Naive thymus-derived CD4-positive, alpha-beta T cell (primary cell): ENCODE measurements at regions of chr11 and their contacts with region 1.

Region 1: GRCh38 chr11:65013692-65014145 is 241 bp upstream of the ARL2 start:
- DNase-seq: peak in 8 of 9 donors; percentile 77 to 93 (median 90)
- ATAC-seq: peak; percentile 94
- H3K4me3 ChIP-seq: peak overlapping the region; percentile 97
- H3K4me3 Mint-ChIP-seq: peak overlapping the region; percentile 90 to 95 (median 92)
- H3K27ac ChIP-seq: peak overlapping the region; percentile 84
- H3K27ac Mint-ChIP-seq: peak overlapping the region; percentile 89 to 99 (median 95)
- H3K4me1 ChIP-seq: peaks cover 4 to 9% of the 10 kb centered on the region in 2 donors
- H3K4me1 Mint-ChIP-seq: peaks cover 14 to 33% (median 29%) of the 10 kb centered on the region in 7 donors
- H3K27me3 ChIP-seq: no peaks in the 10 kb centered on the region
- H3K27me3 Mint-ChIP-seq: no peaks in the 10 kb centered on the region

Region 2: GRCh38 chr11:64803163-64803845 is 210.4 kb before region 1 on chr11 and contains the start of gene MAP4K2:
- CTCF ChIA-PET with region 1: no interaction called
- POLR2A ChIA-PET with region 1: no interaction called
- intact Hi-C with region 1: loop called in 1 of 2 experiments (anchors 2 kb)
- DNase-seq: peak; percentile 80 to 96 (median 87)
- ATAC-seq: peak; percentile 98
- H3K4me3 ChIP-seq: peak within 1 kb of the TSS; percentile 91
- H3K4me3 Mint-ChIP-seq: peak within 1 kb of the TSS; percentile 85 to 92 (median 88)
- H3K27ac ChIP-seq: peak within 1 kb of the TSS; percentile 98
- H3K27ac Mint-ChIP-seq: peak within 1 kb of the TSS; percentile 82 to 97 (median 95)
- H3K4me1 ChIP-seq: peaks cover 9 to 23% of the 10 kb centered on the region in 2 donors
- H3K4me1 Mint-ChIP-seq: peaks cover 27 to 43% (median 32%) of the 10 kb centered on the region in 7 donors
- H3K27me3 ChIP-seq: no peaks in the 10 kb centered on the region
- H3K27me3 Mint-ChIP-seq: no peaks in the 10 kb centered on the region
- total RNA-seq, gene MAP4K2: 75.2 to 130 (median 84.3) TPM

Region 3: DNA sequence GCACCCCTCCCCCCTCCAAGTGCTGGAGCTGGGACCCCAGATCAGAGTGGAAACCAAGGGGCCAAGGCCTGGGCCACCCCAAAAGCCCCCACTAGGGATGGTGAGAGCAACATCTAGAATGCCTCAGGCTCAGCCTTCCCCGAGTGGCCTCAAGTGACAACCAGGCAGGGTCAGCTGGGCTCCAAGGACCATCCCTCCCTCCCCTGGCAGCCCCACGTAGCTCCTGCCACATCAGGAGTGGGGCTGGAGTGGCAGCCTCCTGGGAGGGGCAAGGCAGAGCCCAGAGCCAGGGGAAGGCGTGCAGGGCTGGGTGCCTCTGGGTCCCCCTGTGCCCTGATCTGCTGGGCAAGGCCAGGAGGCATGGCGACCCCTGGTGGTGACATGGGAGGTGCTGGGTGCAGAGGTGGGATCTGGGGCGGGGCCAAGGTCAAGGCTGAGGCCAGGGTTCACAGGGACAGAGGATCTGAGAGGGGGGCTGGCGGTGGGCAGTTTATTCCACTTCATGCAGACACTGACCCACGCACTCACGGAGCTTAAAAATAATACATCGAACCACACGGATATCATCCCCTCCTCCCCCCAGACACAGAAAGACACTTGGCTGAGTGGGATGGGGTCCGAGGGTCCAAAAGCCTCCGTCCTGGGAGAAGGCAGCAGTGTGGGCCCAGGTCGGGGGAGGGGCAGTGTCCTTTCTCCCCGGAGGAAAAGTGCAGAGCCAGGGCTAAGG is 119.5 kb before region 1 on chr11:
- CTCF ChIA-PET with region 1: no interaction called
- POLR2A ChIA-PET with region 1: no interaction called
- intact Hi-C with region 1: no loop called
- DNase-seq: peak; percentile 75 to 93 (median 87)
- ATAC-seq: peak; percentile 89
- H3K4me3 ChIP-seq: no peak overlapping the region
- H3K4me3 Mint-ChIP-seq: peak overlapping the region in 1 of 10 donors; percentile 21
- H3K27ac ChIP-seq: no peak overlapping the region
- H3K27ac Mint-ChIP-seq: peak overlapping the region in 2 of 9 donors; percentile 45 to 75
- H3K4me1 ChIP-seq: peaks cover 0 to 6% of the 10 kb centered on the region in 2 donors
- H3K4me1 Mint-ChIP-seq: peaks cover 0 to 6% (median 0%) of the 10 kb centered on the region in 7 donors
- H3K27me3 ChIP-seq: no peaks in the 10 kb centered on the region
- H3K27me3 Mint-ChIP-seq: no peaks in the 10 kb centered on the region

Region 4: GRCh38 chr11:65027213-65028067 is 13.7 kb after region 1 on chr11 and contains the start of gene SNX15:
- CTCF ChIA-PET with region 1: interaction called, 4 read pairs
- POLR2A ChIA-PET with region 1: interaction called, 28 read pairs
- intact Hi-C with region 1: loop called (anchors 1 kb)
- DNase-seq: peak; percentile 61 to 95 (median 94)
- ATAC-seq: peak; percentile 97
- H3K4me3 ChIP-seq: peak within 1 kb of the TSS; percentile 41
- H3K4me3 Mint-ChIP-seq: peak within 1 kb of the TSS; percentile 66 to 91 (median 83)
- H3K27ac ChIP-seq: peak within 1 kb of the TSS; percentile 59
- H3K27ac Mint-ChIP-seq: peak within 1 kb of the TSS; percentile 59 to 95 (median 87)
- H3K4me1 ChIP-seq: peaks cover 9 to 14% of the 10 kb centered on the region in 2 donors
- H3K4me1 Mint-ChIP-seq: peaks cover 12 to 24% (median 21%) of the 10 kb centered on the region in 7 donors
- H3K27me3 ChIP-seq: no peaks in the 10 kb centered on the region
- H3K27me3 Mint-ChIP-seq: no peaks in the 10 kb centered on the region
- total RNA-seq, gene SNX15: 13.1 to 29.0 (median 21.7) TPM

Region 5: DNA sequence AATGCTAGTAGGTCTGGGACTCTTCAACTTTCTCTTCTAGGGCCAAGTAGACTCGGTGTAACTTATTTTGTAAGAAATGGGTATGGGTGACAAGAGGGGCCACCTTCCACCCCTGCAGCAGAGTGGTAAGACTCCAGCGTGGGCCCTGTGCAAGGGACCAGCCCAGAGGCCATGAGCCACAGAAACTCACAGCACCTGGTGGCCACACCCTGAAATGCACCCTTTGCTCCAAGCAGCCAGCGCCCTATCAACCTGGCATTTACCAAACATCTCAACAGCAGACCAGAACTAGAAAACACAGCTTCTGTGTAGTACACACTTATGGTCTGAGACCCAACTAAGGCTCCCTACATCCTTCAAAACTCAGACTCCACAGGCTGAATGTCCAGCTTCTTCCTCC is 64.4 kb after region 1 on chr11:
- CTCF ChIA-PET with region 1: interaction called, 7 read pairs
- POLR2A ChIA-PET with region 1: interaction called, 4 read pairs
- intact Hi-C with region 1: loop called (anchors 1 kb)
- DNase-seq: peak; percentile 47 to 71 (median 64)
- ATAC-seq: peak; percentile 97
- H3K4me3 ChIP-seq: no peak overlapping the region
- H3K4me3 Mint-ChIP-seq: peak overlapping the region in 1 of 10 donors; percentile 48
- H3K27ac ChIP-seq: no peak overlapping the region
- H3K27ac Mint-ChIP-seq: peak overlapping the region; percentile 9 to 83 (median 63)
- H3K4me1 ChIP-seq: no peaks in the 10 kb centered on the region
- H3K4me1 Mint-ChIP-seq: peaks cover 3 to 48% (median 7%) of the 10 kb centered on the region in 7 donors
- H3K27me3 ChIP-seq: no peaks in the 10 kb centered on the region
- H3K27me3 Mint-ChIP-seq: no peaks in the 10 kb centered on the region

Region 6: GRCh38 chr11:65111744-65112414 is 98.2 kb after region 1 on chr11 and contains the start of gene TM7SF2:
- CTCF ChIA-PET with region 1: interaction called, 4 read pairs
- POLR2A ChIA-PET with region 1: interaction called, 13 read pairs
- intact Hi-C with region 1: loop called (anchors 1 kb)
- DNase-seq: peak; percentile 84 to 94 (median 92)
- ATAC-seq: peak; percentile 82
- H3K4me3 ChIP-seq: peak within 1 kb of the TSS; percentile 83
- H3K4me3 Mint-ChIP-seq: peak within 1 kb of the TSS; percentile 85 to 97 (median 89)
- H3K27ac ChIP-seq: peak within 1 kb of the TSS; percentile 74
- H3K27ac Mint-ChIP-seq: peak within 1 kb of the TSS; percentile 80 to 100 (median 90)
- H3K4me1 ChIP-seq: peaks cover 33 to 36% of the 10 kb centered on the region in 2 donors
- H3K4me1 Mint-ChIP-seq: peaks cover 18 to 52% (median 38%) of the 10 kb centered on the region in 7 donors
- H3K27me3 ChIP-seq: no peaks in the 10 kb centered on the region
- H3K27me3 Mint-ChIP-seq: no peaks in the 10 kb centered on the region
- total RNA-seq, gene TM7SF2: 21.6 to 37.8 (median 30.8) TPM

Region 7: GRCh38 chr11:65314501-65315203 is 300.9 kb after region 1 on chr11 and contains the start of gene CDC42EP2:
- CTCF ChIA-PET with region 1: no interaction called
- POLR2A ChIA-PET with region 1: no interaction called
- intact Hi-C with region 1: loop called in 1 of 2 experiments (anchors 1 kb)
- DNase-seq: peak; percentile 42 to 87 (median 56)
- ATAC-seq: peak; percentile 94
- H3K4me3 ChIP-seq: peak within 1 kb of the TSS; percentile 68
- H3K4me3 Mint-ChIP-seq: peak within 1 kb of the TSS; percentile 47 to 86 (median 76)
- H3K27ac ChIP-seq: peak within 1 kb of the TSS; percentile 59
- H3K27ac Mint-ChIP-seq: peak within 1 kb of the TSS in 3 of 9 donors; percentile 32 to 40 (median 38)
- H3K4me1 ChIP-seq: peaks cover 0 to 11% of the 10 kb centered on the region in 2 donors
- H3K4me1 Mint-ChIP-seq: peaks cover 0 to 13% (median 5%) of the 10 kb centered on the region in 7 donors
- H3K27me3 ChIP-seq: no peaks in the 10 kb centered on the region
- H3K27me3 Mint-ChIP-seq: peaks cover 0 to 12% (median 0%) of the 10 kb centered on the region in 5 donors
- total RNA-seq, gene CDC42EP2: 0.58 to 1.8 (median 0.89) TPM